Heart right ventricle (tissue), 16 donors: ENCODE measurements at regions of chr13 and their contacts with region 1.

Region 1: DNA sequence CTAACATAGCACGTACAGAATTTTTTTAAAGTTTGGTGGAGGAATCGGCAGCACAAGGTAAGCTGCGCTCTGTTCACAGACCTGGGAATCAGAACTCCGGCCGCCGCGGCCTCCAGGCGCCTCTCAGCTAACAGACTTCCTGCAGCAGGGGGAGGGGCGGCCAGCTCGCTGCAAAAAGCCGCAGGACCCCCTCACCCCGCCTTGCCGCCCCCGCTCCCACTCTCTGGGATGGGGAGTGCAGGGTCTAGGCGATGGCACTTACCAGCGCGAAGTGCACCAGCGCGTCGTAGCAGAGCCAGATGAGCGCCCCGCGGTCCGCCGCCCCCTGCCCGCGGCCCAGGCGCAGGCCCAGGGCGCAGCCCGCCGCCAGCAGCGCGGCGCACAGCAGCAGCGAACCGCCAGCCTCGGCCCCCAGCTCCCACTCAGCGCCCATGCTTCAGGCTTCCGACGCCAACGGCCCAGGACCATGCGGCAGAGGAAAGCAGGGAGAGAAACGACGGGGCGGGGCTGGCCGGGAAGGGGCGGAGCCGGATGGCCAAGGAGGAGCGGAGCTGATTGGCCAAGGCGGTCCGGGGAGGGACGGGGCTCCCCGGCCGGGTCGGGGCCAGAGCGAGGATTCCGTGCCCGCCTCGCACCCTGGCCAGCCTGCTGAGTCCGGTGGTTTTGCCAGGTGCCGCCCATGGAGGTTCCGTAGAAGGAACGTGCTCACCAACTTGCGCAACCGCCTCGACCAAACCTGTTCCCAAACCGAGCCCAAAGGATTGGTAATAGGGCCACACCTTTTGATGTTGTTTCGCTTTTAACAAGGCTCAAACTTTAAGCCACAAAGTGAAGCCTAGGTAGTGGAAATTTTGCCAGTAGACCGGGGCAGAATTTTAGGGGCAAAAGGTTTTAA is at the start of gene EBPL:
- DNase-seq: peak; percentile 93 to 95
- ATAC-seq: peak; percentile 98 to 100 (median 99)
- H3K4me3 ChIP-seq: peak within 1 kb of the TSS; percentile 60 to 96 (median 70)
- H3K27ac ChIP-seq: peak within 1 kb of the TSS in 9 of 10 donors; percentile 66 to 88 (median 81)
- H3K4me1 ChIP-seq: peaks cover 0 to 22% (median 9%) of the 10 kb centered on the region in 9 donors
- H3K27me3 ChIP-seq: no peaks in the 10 kb centered on the region
- CTCF ChIP-seq: no peak
- total RNA-seq, gene EBPL: 3.4 to 7.5 (median 5.6) TPM

Region 2: GRCh38 chr13:49329821-49330220 is 361.4 kb before region 1 on chr13:
- intact Hi-C with region 1: no loop called
- DNase-seq: no peak
- ATAC-seq: no peak
- H3K4me3 ChIP-seq: no peak overlapping the region
- H3K27ac ChIP-seq: no peak overlapping the region
- H3K4me1 ChIP-seq: peaks cover 0 to 8% (median 0%) of the 10 kb centered on the region in 9 donors
- H3K27me3 ChIP-seq: no peaks in the 10 kb centered on the region
- CTCF ChIP-seq: no peak

Region 3: DNA sequence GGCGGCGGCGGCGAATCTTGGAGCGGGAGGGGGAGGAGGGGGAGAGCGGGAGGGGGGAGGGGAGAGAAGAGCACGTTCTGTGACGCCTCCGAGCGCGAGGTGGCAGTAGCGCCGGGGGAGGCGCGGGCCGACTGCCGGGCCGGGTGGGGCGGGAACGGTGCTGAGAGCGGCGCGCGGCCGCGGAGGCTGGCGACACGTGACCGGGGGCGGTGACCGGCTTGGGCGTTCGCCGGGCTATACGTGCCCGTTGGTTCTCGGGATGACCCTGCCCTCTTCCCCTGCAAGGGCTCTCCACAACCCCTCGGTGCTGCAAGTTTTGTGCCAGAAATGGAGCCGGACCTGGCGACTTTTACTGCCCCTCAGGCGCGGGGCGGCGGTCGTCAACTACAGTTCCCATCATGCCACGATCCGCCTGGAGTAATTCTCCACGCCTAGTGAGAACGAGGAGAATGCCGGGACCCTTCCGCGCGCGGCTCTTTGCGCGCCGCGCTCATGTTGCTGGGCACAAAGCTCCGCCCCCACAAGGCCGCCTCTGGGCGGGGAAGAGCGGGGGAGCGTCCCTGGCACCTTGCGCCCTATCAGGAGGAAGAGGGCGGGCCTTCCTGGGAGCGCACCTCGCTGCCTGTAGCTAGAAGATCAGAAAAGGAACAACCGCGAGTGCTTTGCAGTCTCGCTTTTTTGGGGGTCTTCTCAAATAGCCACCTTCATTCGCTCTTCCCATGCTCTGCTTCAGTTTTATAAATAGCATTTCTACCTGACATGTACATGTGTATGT is 101.5 kb after region 1 on chr13 and contains the start of gene KPNA3:
- intact Hi-C with region 1: loop called in 6 of 10 experiments (anchors 2 to 10 kb)
- DNase-seq: peak; percentile 95 to 97
- ATAC-seq: peak; percentile 95 to 98 (median 98)
- H3K4me3 ChIP-seq: peak within 1 kb of the TSS; percentile 66 to 98 (median 86)
- H3K27ac ChIP-seq: peak within 1 kb of the TSS; percentile 88 to 99 (median 94)
- H3K4me1 ChIP-seq: peaks cover 3 to 46% (median 33%) of the 10 kb centered on the region in 9 donors
- H3K27me3 ChIP-seq: no peaks in the 10 kb centered on the region
- CTCF ChIP-seq: peak in 6 of 9 donors; percentile 8 to 46 (median 34)
- total RNA-seq, gene KPNA3: 47.7 to 79.1 (median 56.7) TPM

Region 4: GRCh38 chr13:49936085-49936940 is 245.1 kb after region 1 on chr13 and contains the start of gene SPRYD7:
- intact Hi-C with region 1: loop called in 1 of 10 experiments (anchors 10 kb)
- DNase-seq: peak; percentile 97 to 99
- ATAC-seq: peak; percentile 99 to 100 (median 100)
- H3K4me3 ChIP-seq: peak within 1 kb of the TSS; percentile 62 to 94 (median 79)
- H3K27ac ChIP-seq: peak within 1 kb of the TSS; percentile 30 to 90 (median 83)
- H3K4me1 ChIP-seq: peaks cover 2 to 52% (median 38%) of the 10 kb centered on the region in 9 donors
- H3K27me3 ChIP-seq: no peaks in the 10 kb centered on the region
- CTCF ChIP-seq: peak; percentile 85 to 99 (median 92)
- total RNA-seq, gene SPRYD7: 10.0 to 14.4 (median 12.9) TPM